Right cardiac atrium (tissue), 5 donors: ENCODE measurements at regions of chr9 and their contacts with region 1.

Region 1: GRCh38 chr9:14608540-14608939 is 84.7 kb downstream of the ZDHHC21 start:
- DNase-seq: no peak
- ATAC-seq: no peak
- H3K4me3 ChIP-seq: no peak overlapping the region
- H3K27ac ChIP-seq: no peak overlapping the region
- H3K4me1 ChIP-seq: no peaks in the 10 kb centered on the region
- H3K27me3 ChIP-seq: no peaks in the 10 kb centered on the region

Region 2: GRCh38 chr9:14670718-14671117 is 62.2 kb after region 1 on chr9:
- intact Hi-C with region 1: no loop called
- DNase-seq: no peak
- ATAC-seq: no peak
- H3K4me3 ChIP-seq: no peak overlapping the region
- H3K27ac ChIP-seq: no peak overlapping the region
- H3K4me1 ChIP-seq: no peaks in the 10 kb centered on the region
- H3K27me3 ChIP-seq: no peaks in the 10 kb centered on the region

Region 3: DNA sequence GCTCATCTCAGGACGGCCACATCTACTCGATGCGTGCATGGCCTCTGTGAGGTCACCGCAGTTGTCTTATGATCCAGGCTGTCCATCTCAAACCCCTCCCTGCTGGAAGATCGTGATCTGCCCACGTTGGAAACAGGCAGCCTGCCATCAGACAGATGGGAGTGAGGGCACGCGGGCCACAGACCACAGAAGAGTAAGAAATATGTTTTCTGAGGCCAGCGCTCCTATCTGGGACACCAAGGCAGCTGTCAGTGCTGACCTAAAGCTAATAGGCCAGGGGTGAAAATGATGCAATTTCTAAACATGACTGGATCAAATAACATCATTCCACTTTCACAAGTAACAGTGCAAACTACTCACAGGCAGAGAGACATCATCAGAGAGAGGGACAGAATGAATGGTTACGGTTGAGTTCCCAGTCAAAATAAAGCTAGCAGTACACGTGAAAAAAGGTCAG is 171.1 kb after region 1 on chr9:
- intact Hi-C with region 1: loop called in 1 of 4 experiments (anchors 5 kb)
- DNase-seq: peak in 1 of 3 donors; percentile 12
- ATAC-seq: no peak
- H3K4me3 ChIP-seq: no peak overlapping the region
- H3K27ac ChIP-seq: no peak overlapping the region
- H3K4me1 ChIP-seq: no peaks in the 10 kb centered on the region
- H3K27me3 ChIP-seq: no peaks in the 10 kb centered on the region